Esophagus muscularis mucosa (tissue), 4 donors: ENCODE measurements at regions of chr2 and their contacts with region 1.

Region 1: DNA sequence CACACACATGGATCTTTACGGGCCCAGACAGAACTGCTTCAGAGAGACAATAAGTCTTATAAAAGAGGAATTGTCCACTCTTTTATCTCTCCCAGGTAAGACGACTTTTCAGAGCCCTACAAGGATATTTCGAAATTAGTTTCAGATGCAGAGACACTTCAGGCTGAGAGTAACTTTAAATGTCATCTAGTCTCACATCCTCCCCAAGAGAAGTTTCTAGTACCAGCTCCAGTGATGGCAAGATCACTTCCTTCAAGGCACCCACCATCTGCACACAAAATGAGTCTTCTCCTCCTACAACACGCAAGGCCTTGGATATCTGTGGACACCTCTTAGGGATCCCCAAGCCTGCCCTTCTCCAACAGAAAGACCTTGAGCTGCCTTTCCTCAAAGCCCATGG is 39.0 kb upstream of the KLHL29 start:
- DNase-seq: no peak
- H3K4me3 ChIP-seq: no peak overlapping the region
- H3K27ac ChIP-seq: no peak overlapping the region
- H3K4me1 ChIP-seq: peaks cover 0 to 8% (median 4%) of the 10 kb centered on the region in 4 donors
- H3K27me3 ChIP-seq: no peaks in the 10 kb centered on the region
- CTCF ChIP-seq: no peak
- EP300 ChIP-seq: no peak
- POLR2A ChIP-seq: no peak

Region 2: GRCh38 chr2:23293063-23293462 is 53.0 kb before region 1 on chr2:
- intact Hi-C with region 1: loop called (anchors 5 kb)
- DNase-seq: no peak
- H3K4me3 ChIP-seq: no peak overlapping the region
- H3K27ac ChIP-seq: peak overlapping the region; percentile 5 to 41 (median 36)
- H3K4me1 ChIP-seq: peaks cover 8 to 38% (median 29%) of the 10 kb centered on the region in 4 donors
- H3K27me3 ChIP-seq: no peaks in the 10 kb centered on the region
- CTCF ChIP-seq: no peak
- EP300 ChIP-seq: no peak
- POLR2A ChIP-seq: no peak